ENCODE measurements at regions of chr1 and their contacts with region 1.

Region 1: GRCh38 chr1:227482023-227482299 is 81.4 kb upstream of the ZNF678 start:
- DNase-seq: no peak
- H3K4me3 ChIP-seq: no peak overlapping the region
- H3K27ac ChIP-seq: no peak overlapping the region
- H3K27me3 ChIP-seq: no peaks in the 10 kb centered on the region
- CTCF ChIP-seq: no peak

Region 2: GRCh38 chr1:227072991-227073390 is 409.0 kb before region 1 on chr1:
- CTCF ChIA-PET with region 1: no interaction called
- POLR2A ChIA-PET with region 1: no interaction called
- DNase-seq: no peak
- H3K4me3 ChIP-seq: no peak overlapping the region
- H3K27ac ChIP-seq: no peak overlapping the region
- H3K27me3 ChIP-seq: no peaks in the 10 kb centered on the region
- CTCF ChIP-seq: no peak

Region 3: DNA sequence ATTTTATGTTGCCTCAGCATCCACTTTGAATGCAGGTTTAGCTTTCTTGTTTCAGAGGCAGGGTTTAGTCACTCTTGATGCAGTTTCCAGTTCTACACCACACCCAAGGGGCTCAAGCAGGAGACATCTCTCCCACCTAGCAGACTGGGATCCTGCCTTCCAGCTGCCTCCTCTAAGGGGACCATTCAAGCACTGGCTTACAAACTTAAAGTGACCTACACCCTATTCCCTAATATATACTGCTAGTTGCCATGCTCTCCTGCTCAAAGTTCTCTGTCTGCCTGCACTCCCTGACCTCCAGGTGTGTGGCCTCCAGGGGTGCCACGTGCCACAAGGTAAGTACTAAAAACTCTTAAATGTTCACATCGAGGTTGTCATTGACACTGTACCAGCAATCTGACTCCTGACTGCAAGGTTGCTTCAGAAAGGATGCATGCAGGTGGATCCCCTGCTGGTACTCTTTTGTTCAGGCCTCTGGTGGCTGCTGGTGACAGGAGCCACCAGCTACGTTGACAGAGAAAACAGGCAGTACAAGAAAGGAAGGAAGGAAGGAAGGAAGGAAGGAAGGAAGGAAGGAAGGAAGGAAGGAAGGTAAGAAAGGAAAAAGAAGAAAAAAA is 355.9 kb before region 1 on chr1:
- CTCF ChIA-PET with region 1: no interaction called
- POLR2A ChIA-PET with region 1: no interaction called
- DNase-seq: no peak
- H3K4me3 ChIP-seq: no peak overlapping the region
- H3K27ac ChIP-seq: no peak overlapping the region
- H3K27me3 ChIP-seq: no peaks in the 10 kb centered on the region
- CTCF ChIP-seq: no peak

Region 4: GRCh38 chr1:227952374-227953021 is 470.5 kb after region 1 on chr1:
- CTCF ChIA-PET with region 1: interaction called, 10 read pairs
- POLR2A ChIA-PET with region 1: no interaction called
- DNase-seq: no peak
- H3K4me3 ChIP-seq: no peak overlapping the region
- H3K27ac ChIP-seq: no peak overlapping the region
- H3K27me3 ChIP-seq: peaks cover 7% of the 10 kb centered on the region
- CTCF ChIP-seq: no peak

Measured in AG04450 (cell line).